ENCODE measurements at regions of chr2 and their contacts with region 1.

Region 1: DNA sequence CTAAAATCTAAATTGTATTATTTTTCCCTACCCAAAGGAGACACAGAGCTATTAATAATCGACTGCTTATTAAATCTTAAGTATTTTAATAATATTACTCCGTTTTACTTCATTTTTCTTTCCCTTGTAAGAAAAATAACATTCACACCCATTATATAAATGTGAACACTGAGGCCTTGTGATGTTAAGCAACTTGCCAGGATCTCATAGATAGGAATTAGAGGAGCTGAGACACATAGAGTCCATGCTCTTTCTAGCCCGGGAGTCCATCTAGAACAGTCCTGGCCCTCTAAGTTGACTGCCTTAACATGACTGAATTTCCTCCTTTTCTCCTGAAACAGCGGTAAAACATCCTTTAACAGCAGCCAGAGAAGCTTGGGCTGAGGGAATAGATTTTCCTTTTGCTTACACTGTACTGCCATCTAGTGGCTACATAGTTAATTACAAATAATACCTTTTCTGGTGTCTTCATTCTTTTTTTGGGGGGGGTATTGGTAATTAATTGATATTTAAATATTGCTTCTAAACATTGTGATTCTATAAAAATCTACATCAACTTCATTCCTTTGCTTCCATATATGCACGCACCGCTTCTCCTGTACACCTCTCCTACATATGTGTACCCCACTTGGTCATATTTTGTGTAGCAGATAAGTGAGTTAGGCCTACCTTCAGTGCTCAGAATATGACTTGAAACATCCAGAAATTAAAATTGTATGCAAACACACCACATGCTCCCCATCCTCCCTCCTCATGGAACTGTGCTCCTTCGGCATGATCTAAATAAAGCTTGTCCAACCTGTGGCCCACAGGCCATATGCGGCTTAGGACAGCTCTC is 125.8 kb upstream of the HNMT start:
- DNase-seq: peak; percentile 26
- CTCF ChIP-seq: peak; percentile 17

Region 2: GRCh38 chr2:136423516-136423996 is 1414.9 kb before region 1 on chr2:
- in situ Hi-C with region 1: loop called (anchors 25 kb)
- DNase-seq: peak; percentile 86
- CTCF ChIP-seq: peak; percentile 86

Region 3: DNA sequence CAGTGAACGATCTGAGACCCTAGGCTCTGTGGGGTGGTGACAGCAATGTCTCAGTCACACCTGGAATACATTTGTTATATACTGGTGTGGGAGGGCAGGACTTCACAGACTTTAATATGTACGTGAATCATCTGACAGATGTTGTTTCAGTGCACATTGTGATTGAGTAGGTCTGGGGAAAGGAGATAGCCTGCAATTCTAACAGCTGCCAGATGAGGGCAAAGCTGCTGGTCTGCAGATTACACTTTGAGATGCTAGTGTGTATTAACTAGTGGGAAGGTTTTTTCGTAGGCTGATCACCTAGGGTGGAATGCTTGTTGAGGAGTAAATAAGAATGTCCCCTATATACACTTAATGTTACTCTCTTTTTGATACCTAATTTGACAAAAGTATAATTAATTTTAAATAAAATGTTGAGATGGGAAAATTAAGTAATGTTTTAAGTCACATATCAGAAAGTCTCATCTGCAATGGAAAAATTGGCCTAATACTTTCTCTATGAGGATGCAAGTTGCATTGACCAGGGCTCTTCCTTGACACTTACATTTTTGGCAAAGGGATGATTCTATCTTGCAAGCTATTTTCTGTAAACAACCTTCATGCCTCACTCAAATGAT is 371.1 kb before region 1 on chr2:
- in situ Hi-C with region 1: loop called (anchors 25 kb)
- DNase-seq: peak; percentile 9
- CTCF ChIP-seq: peak; percentile 45